Heart right ventricle (tissue), 16 donors: ENCODE measurements at regions of chr2 and their contacts with region 1.

Region 1: DNA sequence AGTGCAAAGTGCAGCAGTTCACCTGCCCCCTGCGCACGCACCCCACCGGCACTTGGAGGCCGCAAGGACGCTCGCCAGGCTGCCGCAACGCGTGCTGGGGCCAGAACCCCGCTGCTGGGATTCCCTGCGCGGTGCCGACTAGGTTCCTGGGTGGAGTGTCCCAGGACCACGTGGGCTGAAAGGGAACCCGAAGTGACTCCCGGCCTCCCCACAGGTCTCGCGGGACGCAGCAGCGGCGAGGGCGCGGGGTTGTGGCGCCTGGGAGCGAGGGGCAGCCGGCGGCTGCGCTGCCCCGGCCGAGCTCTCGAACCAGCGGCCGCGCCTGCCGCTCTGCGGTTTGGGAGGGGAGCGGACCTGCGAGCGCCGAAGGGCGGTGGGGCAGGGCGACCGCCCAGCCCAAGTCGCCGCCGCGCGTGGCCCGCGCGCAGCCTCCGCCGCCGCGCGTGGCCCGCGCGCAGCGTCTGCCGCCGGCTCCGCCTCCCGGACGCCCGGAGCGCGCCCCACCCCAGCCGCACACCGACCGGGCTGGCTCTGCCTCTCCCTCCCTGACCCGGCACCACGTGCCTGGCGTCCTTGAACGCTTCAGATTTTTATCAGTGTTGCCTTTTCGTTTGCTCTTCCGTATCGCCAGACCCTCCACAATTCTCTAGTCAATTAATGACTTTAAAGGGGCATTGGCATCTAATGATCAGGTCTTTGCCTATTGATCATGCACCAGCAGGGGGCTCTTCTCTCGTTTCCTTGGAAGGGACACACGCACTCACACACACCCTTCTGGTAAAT is at the start of gene FTCDNL1:
- DNase-seq: peak; percentile 39 to 62
- ATAC-seq: peak; percentile 80 to 96 (median 91)
- H3K4me3 ChIP-seq: peak within 1 kb of the TSS; percentile 33 to 83 (median 68)
- H3K27ac ChIP-seq: peak within 1 kb of the TSS in 5 of 10 donors; percentile 30 to 82 (median 48)
- H3K4me1 ChIP-seq: peaks cover 0 to 15% (median 4%) of the 10 kb centered on the region in 9 donors
- H3K27me3 ChIP-seq: peaks cover 0 to 27% (median 0%) of the 10 kb centered on the region in 7 donors
- CTCF ChIP-seq: peak in 6 of 9 donors; percentile 26 to 57 (median 50)
- total RNA-seq, gene FTCDNL1: 2.5 to 7.1 (median 4.8) TPM

Region 2: GRCh38 chr2:198587240-198587639 is 1263.7 kb before region 1 on chr2:
- intact Hi-C with region 1: loop called in 1 of 10 experiments (anchors 5 kb)
- DNase-seq: no peak
- ATAC-seq: no peak
- H3K4me3 ChIP-seq: no peak overlapping the region
- H3K27ac ChIP-seq: no peak overlapping the region
- H3K4me1 ChIP-seq: no peaks in the 10 kb centered on the region
- H3K27me3 ChIP-seq: no peaks in the 10 kb centered on the region
- CTCF ChIP-seq: no peak

Region 3: DNA sequence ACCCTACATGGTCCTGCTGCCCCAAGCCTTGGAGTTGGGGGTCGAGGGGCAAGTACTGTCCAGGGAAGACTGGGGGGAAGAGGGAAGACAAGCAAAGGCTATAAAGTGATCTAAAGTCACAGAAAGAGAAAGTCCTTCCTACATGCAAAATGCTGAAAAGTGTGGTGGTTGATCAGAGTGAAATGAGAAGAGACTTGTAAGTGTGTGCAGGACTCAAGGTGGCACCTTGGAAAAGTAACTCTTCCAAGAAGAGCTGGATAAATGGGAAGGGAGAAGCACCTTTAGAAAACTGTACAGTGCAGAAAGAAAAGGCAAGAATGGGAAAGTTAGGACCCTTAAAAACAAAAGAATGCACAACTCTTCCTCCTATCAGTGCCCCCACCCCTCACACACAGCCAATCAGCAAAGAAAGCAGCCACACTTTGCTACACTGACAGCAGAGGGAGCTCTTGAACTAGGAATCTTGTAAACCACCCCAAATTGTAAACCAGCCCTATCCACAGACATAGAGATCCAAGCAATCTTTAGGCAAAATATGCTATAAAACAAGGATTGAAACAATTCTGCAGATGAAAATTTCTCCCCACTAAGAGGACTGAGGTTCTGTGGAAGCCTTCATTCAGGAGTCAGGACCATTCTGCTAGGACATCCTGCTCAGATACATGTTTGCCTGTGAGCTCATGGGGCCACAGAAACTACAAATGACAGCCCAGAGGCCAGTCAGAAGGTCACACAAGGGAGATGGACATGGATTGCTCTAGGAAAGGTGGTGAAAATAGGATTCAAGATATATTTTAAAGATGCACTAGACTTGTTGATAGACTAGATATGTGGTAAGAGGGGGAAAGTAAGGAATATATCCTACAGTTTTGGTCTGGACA is 146.3 kb before region 1 on chr2:
- intact Hi-C with region 1: no loop called
- DNase-seq: peak in 1 of 2 donors; percentile 5
- ATAC-seq: peak in 3 of 8 donors; percentile 46 to 70 (median 63)
- H3K4me3 ChIP-seq: no peak overlapping the region
- H3K27ac ChIP-seq: no peak overlapping the region
- H3K4me1 ChIP-seq: no peaks in the 10 kb centered on the region
- H3K27me3 ChIP-seq: no peaks in the 10 kb centered on the region
- CTCF ChIP-seq: peak in 7 of 9 donors; percentile 33 to 54 (median 47)

Region 4: DNA sequence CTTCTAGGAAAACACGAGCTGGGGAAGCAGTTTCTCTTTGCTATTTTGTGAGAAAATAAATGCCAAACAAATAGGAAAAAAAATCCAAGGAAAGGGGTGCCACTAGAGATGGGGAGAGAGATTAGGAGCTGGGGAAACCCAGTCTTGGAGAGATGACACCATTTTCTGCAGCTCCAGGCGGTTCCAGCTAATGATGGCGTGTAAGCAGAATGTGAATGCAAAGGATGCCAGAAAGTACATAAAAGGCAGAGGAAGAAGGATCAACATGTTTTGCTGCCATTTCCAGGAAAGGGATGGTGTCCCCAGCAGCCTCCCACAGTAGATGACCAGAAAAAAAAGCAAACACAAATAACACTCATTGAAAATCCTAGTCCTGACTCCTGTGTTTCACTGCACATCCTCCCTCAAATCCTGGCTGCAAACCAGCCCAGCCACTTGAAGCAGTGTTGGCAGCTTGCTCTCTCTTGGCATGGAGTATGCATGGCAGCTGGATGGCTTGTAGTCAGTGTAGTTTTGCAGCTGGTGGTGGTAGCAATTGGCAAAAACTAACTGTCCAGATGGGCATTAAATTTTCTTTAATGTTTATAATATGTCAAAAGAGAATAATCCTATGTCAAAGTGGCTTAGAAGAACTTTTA is 93.6 kb before region 1 on chr2:
- intact Hi-C with region 1: loop called in 1 of 10 experiments (anchors 10 kb)
- DNase-seq: peak; percentile 36 to 61
- ATAC-seq: peak in 6 of 8 donors; percentile 78 to 93 (median 88)
- H3K4me3 ChIP-seq: no peak overlapping the region
- H3K27ac ChIP-seq: no peak overlapping the region
- H3K4me1 ChIP-seq: peaks cover 0 to 3% (median 0%) of the 10 kb centered on the region in 9 donors
- H3K27me3 ChIP-seq: peaks cover 0 to 13% (median 0%) of the 10 kb centered on the region in 7 donors
- CTCF ChIP-seq: no peak